ENCODE measurements at regions of chr3 and their contacts with region 1.

Region 1: DNA sequence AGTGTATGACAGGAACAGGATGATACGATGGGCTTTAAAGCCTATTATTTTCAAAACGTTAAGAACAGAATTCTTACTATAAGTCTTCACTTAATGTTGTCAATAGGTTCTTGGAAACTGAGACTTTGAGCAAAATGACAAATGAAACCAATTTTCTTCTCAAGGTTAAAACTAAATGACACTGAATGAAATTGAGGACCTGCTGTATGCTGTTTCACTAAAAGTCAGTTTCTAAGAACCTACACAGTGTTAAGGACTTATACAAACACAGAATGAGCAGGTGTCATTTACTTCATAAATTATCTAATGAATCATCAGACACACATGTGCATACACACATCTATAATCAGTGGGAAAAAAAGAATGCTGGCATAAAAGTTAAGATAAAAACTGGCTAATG is 106.9 kb downstream of the RFTN1 start:
- DNase-seq: no peak
- H3K4me3 ChIP-seq: no peak overlapping the region
- H3K27ac ChIP-seq: no peak overlapping the region
- H3K4me1 ChIP-seq: no peaks in the 10 kb centered on the region
- H3K27me3 ChIP-seq: no peaks in the 10 kb centered on the region
- CTCF ChIP-seq: no peak

Region 2: DNA sequence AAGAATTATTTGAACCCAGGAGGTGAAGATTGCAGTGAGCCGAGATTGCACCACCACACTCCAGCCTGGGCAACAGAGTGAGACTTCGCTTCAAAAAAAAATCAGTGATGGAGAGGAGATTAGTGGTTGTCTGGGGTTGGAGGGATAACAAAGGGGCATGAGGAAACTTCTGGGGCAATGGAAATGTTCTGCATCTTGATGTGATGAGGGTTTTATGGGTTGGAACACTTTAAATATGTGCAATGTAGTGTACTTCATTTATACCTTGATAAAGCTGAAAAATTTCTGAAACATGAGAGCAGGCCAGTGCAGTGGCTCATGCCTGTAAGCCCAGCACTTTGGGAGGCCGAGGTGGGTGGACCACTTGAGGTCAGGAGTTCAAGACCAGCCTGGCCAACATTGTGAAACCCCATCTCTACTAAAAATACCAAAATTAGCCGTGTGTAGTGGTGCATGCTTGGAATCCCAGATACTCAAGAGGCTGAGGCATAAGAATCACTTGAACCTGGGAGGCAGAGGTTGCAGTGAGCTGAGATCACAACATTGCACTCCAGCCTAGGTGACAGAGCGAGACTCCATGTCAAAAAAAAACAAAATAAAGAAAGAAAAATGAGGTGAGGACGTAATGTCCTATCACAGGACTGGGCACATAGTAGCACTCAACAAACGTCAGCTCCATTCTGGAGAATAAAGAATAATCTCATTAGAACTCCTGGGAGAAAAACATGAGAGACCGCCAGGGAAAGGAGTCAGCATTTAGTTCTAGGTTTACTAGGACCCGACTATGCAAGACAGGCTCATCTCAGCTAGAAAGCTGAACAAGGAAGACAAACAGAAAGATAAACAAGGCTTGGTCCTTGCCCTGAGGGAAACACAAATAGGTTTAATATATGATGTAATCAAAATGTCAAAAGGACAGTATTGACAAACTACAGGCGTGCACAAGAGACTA is 83.0 kb after region 1 on chr3:
- intact Hi-C with region 1: loop called (anchors 5 kb)
- DNase-seq: no peak
- H3K4me3 ChIP-seq: no peak overlapping the region
- H3K27ac ChIP-seq: no peak overlapping the region
- H3K4me1 ChIP-seq: peaks cover 0 to 12% of the 10 kb centered on the region in 2 donors
- H3K27me3 ChIP-seq: no peaks in the 10 kb centered on the region
- CTCF ChIP-seq: no peak

Measured in ascending aorta (tissue), 2 donors.